Breast epithelium (tissue), 4 donors: ENCODE measurements at regions of chr12 and their contacts with region 1.

Region 1: GRCh38 chr12:41486718-41487117 is 298.6 kb downstream of the PDZRN4 start:
- DNase-seq: no peak
- H3K4me3 ChIP-seq: no peak overlapping the region
- H3K27ac ChIP-seq: no peak overlapping the region
- H3K4me1 ChIP-seq: no peaks in the 10 kb centered on the region
- H3K27me3 ChIP-seq: no peaks in the 10 kb centered on the region
- CTCF ChIP-seq: no peak
- POLR2A ChIP-seq: no peak

Region 2: GRCh38 chr12:41250748-41251147 is 236.0 kb before region 1 on chr12:
- intact Hi-C with region 1: no loop called
- DNase-seq: peak in 1 of 2 donors; percentile 20
- H3K4me3 ChIP-seq: peak overlapping the region in 1 of 3 donors; percentile 49
- H3K27ac ChIP-seq: no peak overlapping the region
- H3K4me1 ChIP-seq: no peaks in the 10 kb centered on the region
- H3K27me3 ChIP-seq: no peaks in the 10 kb centered on the region
- CTCF ChIP-seq: no peak
- POLR2A ChIP-seq: no peak

Region 3: GRCh38 chr12:41436076-41436475 is 50.6 kb before region 1 on chr12:
- intact Hi-C with region 1: no loop called
- DNase-seq: no peak
- H3K4me3 ChIP-seq: no peak overlapping the region
- H3K27ac ChIP-seq: no peak overlapping the region
- H3K4me1 ChIP-seq: no peaks in the 10 kb centered on the region
- H3K27me3 ChIP-seq: no peaks in the 10 kb centered on the region
- CTCF ChIP-seq: no peak
- POLR2A ChIP-seq: no peak

Region 4: DNA sequence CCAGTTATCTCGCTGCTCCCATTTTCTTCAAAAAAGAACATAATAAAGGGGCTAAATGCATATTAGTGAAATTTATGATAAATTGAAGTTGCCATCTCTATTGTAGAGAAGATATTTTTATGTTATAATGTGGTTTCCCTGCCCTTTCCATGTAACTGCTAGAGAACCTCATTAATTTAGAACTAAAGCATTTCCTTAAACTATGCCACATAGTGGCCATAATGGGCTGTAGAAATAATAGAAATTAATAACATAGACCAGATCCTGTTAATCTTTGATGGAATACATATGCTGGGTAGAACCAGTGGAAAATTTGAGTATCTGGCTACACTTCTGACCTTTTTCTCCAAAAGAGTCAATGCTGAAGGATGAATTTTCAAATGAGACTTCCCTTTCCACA is 78.1 kb after region 1 on chr12:
- intact Hi-C with region 1: no loop called
- DNase-seq: no peak
- H3K4me3 ChIP-seq: no peak overlapping the region
- H3K27ac ChIP-seq: no peak overlapping the region
- H3K4me1 ChIP-seq: no peaks in the 10 kb centered on the region
- H3K27me3 ChIP-seq: no peaks in the 10 kb centered on the region
- CTCF ChIP-seq: no peak
- POLR2A ChIP-seq: no peak

Region 5: DNA sequence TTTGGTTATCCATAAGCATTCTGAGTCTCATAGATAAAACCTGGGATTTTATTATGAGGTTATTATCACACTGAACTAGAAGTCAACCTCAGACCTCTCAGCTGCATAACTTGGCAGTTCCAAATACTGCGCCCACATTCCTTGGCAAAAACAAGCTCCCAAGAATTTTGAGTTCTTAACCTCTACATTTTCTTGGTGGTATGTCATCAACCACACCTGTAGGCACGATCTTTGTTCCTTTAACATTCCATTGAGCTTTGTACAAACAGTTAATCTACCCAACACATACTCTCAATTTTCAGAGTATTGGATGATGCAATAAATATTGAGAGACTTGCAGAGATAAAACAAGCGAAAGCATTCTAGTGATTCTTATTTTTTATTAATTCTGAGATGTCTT is 1474.7 kb after region 1 on chr12:
- intact Hi-C with region 1: no loop called
- DNase-seq: peak in 1 of 2 donors; percentile 29
- H3K4me3 ChIP-seq: no peak overlapping the region
- H3K27ac ChIP-seq: peak overlapping the region; percentile 65 to 76
- H3K4me1 ChIP-seq: peaks cover 0 to 3% of the 10 kb centered on the region in 2 donors
- H3K27me3 ChIP-seq: no peaks in the 10 kb centered on the region
- CTCF ChIP-seq: no peak
- POLR2A ChIP-seq: no peak

Region 6: GRCh38 chr12:43131304-43131703 is 1644.6 kb after region 1 on chr12:
- intact Hi-C with region 1: loop called (anchors 10 kb)
- DNase-seq: no peak
- H3K4me3 ChIP-seq: no peak overlapping the region
- H3K27ac ChIP-seq: no peak overlapping the region
- H3K4me1 ChIP-seq: no peaks in the 10 kb centered on the region
- H3K27me3 ChIP-seq: no peaks in the 10 kb centered on the region
- CTCF ChIP-seq: no peak
- POLR2A ChIP-seq: no peak